Natural killer cell (primary cell): ENCODE measurements at regions of chr17 and their contacts with region 1.

Region 1: GRCh38 chr17:38557836-38558727 is 47.7 kb downstream of the SRCIN1 start:
- DNase-seq: peak; percentile 85 to 95
- ATAC-seq: peak; percentile 81 to 85 (median 84)
- H3K4me3 ChIP-seq: peak overlapping the region; percentile 55
- H3K4me3 Mint-ChIP-seq: peak overlapping the region; percentile 98
- H3K27ac ChIP-seq: no peak overlapping the region
- H3K27ac Mint-ChIP-seq: peak overlapping the region; percentile 78 to 79
- H3K4me1 ChIP-seq: peaks cover 44% of the 10 kb centered on the region
- H3K4me1 Mint-ChIP-seq: peaks cover 17 to 28% of the 10 kb centered on the region in 2 donors
- H3K27me3 ChIP-seq: peaks cover 24% of the 10 kb centered on the region
- H3K27me3 Mint-ChIP-seq: peaks cover 26 to 39% of the 10 kb centered on the region in 2 donors
- CTCF ChIP-seq: peak; percentile 84

Region 2: GRCh38 chr17:38333635-38334295 is 224.3 kb before region 1 on chr17:
- intact Hi-C with region 1: no loop called
- DNase-seq: peak in 1 of 2 donors; percentile 53
- ATAC-seq: peak; percentile 31 to 57 (median 52)
- H3K4me3 ChIP-seq: no peak overlapping the region
- H3K4me3 Mint-ChIP-seq: no peak overlapping the region
- H3K27ac ChIP-seq: no peak overlapping the region
- H3K27ac Mint-ChIP-seq: no peak overlapping the region
- H3K4me1 ChIP-seq: no peaks in the 10 kb centered on the region
- H3K4me1 Mint-ChIP-seq: no peaks in the 10 kb centered on the region
- H3K27me3 ChIP-seq: no peaks in the 10 kb centered on the region
- H3K27me3 Mint-ChIP-seq: peaks cover 6 to 10% of the 10 kb centered on the region in 2 donors
- CTCF ChIP-seq: peak; percentile 31

Region 3: GRCh38 chr17:38511081-38511728 is 46.9 kb before region 1 on chr17:
- intact Hi-C with region 1: no loop called
- DNase-seq: no peak
- ATAC-seq: no peak
- H3K4me3 ChIP-seq: no peak overlapping the region
- H3K4me3 Mint-ChIP-seq: peak overlapping the region; percentile 58
- H3K27ac ChIP-seq: no peak overlapping the region
- H3K27ac Mint-ChIP-seq: no peak overlapping the region
- H3K4me1 ChIP-seq: peaks cover 6% of the 10 kb centered on the region
- H3K4me1 Mint-ChIP-seq: peaks cover 7 to 16% of the 10 kb centered on the region in 2 donors
- H3K27me3 ChIP-seq: peaks cover 22% of the 10 kb centered on the region
- H3K27me3 Mint-ChIP-seq: peaks cover 36 to 40% of the 10 kb centered on the region in 2 donors
- CTCF ChIP-seq: no peak

Region 4: DNA sequence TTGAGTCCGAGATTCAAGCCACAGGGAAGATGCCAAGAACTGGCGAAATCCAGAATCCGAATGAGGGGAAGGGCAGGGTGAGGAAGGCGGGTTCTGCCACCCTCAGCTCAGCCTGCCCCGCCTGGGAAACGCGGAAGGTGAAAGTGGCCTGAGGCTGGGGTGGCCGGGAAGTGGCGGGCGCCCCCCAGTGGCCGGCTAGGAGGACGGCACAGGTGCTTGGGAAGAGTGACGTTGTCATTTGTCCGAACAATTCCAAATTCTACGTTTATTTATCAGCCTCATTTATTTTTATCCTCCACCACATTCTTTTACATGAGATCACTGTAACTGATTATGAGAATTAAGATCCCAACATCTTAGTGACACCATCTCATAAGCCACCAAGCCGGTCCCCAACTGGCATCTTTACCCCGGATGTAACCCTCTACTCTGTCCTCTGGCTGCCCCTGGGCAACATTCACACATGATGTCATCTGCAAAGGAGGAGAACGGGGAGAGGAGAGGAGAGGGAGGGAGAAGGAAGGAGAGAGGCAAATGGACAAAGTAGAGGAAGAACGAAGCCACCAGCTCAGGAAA is 26.4 kb after region 1 on chr17:
- intact Hi-C with region 1: loop called (anchors 1 kb)
- DNase-seq: peak; percentile 55 to 75
- ATAC-seq: peak; percentile 72 to 96 (median 94)
- H3K4me3 ChIP-seq: no peak overlapping the region
- H3K4me3 Mint-ChIP-seq: no peak overlapping the region
- H3K27ac ChIP-seq: no peak overlapping the region
- H3K27ac Mint-ChIP-seq: no peak overlapping the region
- H3K4me1 ChIP-seq: peaks cover 9% of the 10 kb centered on the region
- H3K4me1 Mint-ChIP-seq: peaks cover 8 to 11% of the 10 kb centered on the region in 2 donors
- H3K27me3 ChIP-seq: peaks cover 37% of the 10 kb centered on the region
- H3K27me3 Mint-ChIP-seq: peaks cover 65 to 69% of the 10 kb centered on the region in 2 donors
- CTCF ChIP-seq: peak; percentile 90

Region 5: DNA sequence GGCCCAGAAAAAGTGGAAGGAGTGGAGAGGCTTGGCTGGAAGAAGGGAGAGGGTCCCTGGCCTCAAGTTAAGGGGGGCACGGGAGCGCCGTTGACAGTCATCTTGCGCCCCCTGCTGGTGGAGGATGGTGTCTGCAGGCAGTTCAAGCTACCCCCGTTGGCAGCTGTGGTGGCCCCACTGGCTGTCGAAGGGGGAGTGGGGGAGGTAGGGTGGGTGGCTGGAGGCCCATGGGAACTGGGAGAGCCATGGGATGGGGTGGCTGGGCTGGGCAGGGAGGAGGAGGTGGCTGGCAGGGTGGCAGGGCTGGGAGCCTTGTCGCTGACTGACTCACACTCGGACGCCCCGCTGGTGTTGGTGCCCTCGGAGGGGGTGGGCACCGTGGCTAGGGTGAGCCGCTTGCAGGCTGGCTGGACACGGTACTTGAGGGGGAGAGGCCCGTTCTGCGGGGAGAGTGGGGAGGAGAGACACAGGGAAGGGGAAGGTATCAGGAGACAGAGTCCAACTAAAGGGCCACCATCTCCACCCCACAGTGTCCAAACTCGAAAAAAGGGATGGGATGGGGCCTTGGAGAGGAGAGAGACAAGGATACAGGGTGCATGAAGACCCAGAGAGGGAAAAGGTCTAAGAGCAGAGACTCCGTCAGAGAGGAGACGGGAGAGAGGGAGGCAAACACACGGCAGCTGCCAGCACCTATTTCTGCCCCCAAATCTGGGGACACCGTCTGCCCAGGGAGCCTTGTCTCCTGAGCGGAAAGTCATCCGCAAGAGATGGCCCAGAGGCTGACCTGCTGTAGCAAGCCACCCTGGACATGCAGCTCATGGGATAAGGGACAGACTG is 177.3 kb after region 1 on chr17:
- intact Hi-C with region 1: loop called (anchors 1 kb)
- DNase-seq: peak; percentile 78 to 85
- ATAC-seq: peak in 2 of 3 donors; percentile 52 to 59
- H3K4me3 ChIP-seq: no peak overlapping the region
- H3K4me3 Mint-ChIP-seq: no peak overlapping the region
- H3K27ac ChIP-seq: no peak overlapping the region
- H3K27ac Mint-ChIP-seq: peak overlapping the region; percentile 89 to 93
- H3K4me1 ChIP-seq: peaks cover 39% of the 10 kb centered on the region
- H3K4me1 Mint-ChIP-seq: peaks cover 46 to 53% of the 10 kb centered on the region in 2 donors
- H3K27me3 ChIP-seq: no peaks in the 10 kb centered on the region
- H3K27me3 Mint-ChIP-seq: no peaks in the 10 kb centered on the region
- CTCF ChIP-seq: peak; percentile 94